Activated CD4-positive, alpha-beta T cell treated with anti-CD3 and anti-CD28 coated beads, Interleukin-2, amount 10 ng/mL, durations not matched to agents 24 days and 14 days (primary cell): ENCODE measurements at regions of chrX and their contacts with region 1.

Region 1: DNA sequence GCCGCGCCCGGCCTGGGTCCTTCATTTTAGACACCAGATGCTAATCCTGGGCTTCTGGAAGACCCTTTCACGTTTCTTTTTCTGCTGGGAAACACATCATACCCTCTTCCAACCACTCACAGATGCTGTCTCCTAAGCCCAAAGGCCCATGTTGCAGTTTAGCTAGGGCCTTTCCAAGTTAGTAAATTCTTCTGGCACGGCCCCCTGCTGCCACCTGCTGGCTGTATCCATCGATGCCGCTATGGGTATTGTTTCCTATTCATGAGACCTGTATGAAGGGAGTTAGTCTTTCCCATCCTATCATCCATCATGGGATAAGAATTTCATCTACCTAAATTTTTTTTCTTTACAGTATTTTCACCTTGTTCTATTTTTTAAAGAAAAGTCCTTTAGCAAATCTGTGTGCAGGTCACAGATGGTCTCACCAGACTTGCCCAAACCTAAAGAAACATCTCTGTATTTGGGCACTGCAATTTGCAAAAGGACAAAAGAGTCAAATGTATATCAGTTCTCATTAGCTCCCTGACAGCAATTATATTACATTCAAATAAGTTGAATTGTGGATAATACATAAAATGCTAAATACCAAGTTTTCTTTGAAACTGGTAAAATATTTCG is 37.8 kb upstream of the SLC9A7 start:
- DNase-seq: peak; percentile 90
- H3K4me3 Mint-ChIP-seq: no peak overlapping the region
- H3K27ac Mint-ChIP-seq: no peak overlapping the region
- H3K4me1 Mint-ChIP-seq: peaks cover 10% of the 10 kb centered on the region
- H3K27me3 Mint-ChIP-seq: peaks cover 6% of the 10 kb centered on the region

Region 2: DNA sequence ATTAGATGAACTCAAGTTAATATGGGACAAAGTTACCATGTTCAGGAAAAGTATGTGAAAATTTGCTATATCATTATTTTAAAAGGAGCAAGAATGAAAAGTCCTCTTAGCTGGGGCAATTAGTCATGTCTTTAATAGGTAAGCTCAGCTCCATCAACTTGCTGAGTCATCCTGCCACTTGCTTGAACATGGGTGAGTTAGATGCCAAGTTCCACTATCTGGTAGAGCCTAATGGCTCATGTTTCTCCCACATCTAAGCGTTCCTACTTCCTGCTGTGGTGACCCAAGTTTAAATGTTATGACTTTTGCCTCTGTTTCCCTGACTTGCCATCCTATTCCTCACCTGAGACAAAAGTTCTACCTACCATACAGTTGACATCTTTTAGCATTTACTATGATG is 528.3 kb before region 1 on chrX:
- intact Hi-C with region 1: no loop called
- DNase-seq: no peak
- H3K4me3 Mint-ChIP-seq: no peak overlapping the region
- H3K27ac Mint-ChIP-seq: no peak overlapping the region
- H3K4me1 Mint-ChIP-seq: no peaks in the 10 kb centered on the region
- H3K27me3 Mint-ChIP-seq: no peaks in the 10 kb centered on the region

Region 3: DNA sequence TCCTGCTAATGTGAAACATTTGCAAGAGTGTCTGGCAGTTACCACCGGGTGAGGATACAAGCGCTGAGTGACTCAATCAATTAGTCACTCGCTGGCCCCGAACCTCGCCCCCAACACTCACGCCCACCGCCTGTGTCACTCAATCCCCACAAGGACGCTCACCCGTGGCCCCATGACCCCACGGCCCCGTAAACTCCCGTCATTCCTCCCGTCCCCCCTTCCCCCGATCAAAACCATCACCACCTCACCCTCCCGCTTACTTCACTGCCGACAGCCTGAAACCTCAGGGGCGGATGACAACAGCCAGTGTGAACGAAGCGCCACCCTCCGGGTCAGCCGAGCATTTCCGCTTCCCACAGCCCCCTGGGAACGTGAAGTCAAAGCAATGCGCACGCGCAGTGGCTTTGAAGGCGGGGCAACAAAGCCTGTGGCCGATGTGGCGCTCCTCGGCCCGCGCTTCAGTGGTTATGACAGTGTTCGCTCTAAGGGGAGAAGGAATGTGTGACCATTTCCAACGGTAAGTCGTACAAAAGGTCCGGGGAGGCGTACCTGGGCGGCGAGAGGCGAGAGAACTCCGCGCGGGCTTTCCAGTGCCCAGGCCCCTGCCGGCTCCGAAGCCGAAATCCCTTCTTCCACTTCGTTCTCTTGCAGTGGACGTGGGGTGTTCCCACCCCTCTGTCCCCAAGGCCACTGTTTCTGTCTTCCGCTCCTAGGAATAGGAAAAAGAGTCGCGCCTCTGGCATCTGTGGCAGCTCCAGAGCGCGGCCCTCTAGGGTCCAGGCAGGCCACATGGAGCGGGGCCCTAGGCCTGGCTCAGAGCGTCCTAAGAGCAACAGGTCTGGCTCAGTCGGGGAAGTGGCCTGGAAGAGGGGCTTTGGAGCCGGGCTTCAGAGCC is 251.3 kb before region 1 on chrX and contains the start of gene ZNF674:
- intact Hi-C with region 1: loop called (anchors 5 kb)
- DNase-seq: peak; percentile 98
- H3K4me3 Mint-ChIP-seq: peak within 1 kb of the TSS; percentile 95
- H3K27ac Mint-ChIP-seq: peak within 1 kb of the TSS; percentile 97
- H3K4me1 Mint-ChIP-seq: peaks cover 16% of the 10 kb centered on the region
- H3K27me3 Mint-ChIP-seq: no peaks in the 10 kb centered on the region
- total RNA-seq, gene ZNF674: 2.1 and 2.6 TPM in 2 replicates

Region 4: GRCh38 chrX:46554942-46555341 is 241.7 kb before region 1 on chrX:
- intact Hi-C with region 1: loop called (anchors 1 kb)
- DNase-seq: no peak
- H3K4me3 Mint-ChIP-seq: no peak overlapping the region
- H3K27ac Mint-ChIP-seq: no peak overlapping the region
- H3K4me1 Mint-ChIP-seq: no peaks in the 10 kb centered on the region
- H3K27me3 Mint-ChIP-seq: no peaks in the 10 kb centered on the region

Region 5: GRCh38 chrX:46628460-46629371 is 168.0 kb before region 1 on chrX:
- intact Hi-C with region 1: loop called (anchors 10 kb)
- DNase-seq: peak; percentile 68
- H3K4me3 Mint-ChIP-seq: peak overlapping the region; percentile 67
- H3K27ac Mint-ChIP-seq: peak overlapping the region; percentile 94
- H3K4me1 Mint-ChIP-seq: peaks cover 20% of the 10 kb centered on the region
- H3K27me3 Mint-ChIP-seq: no peaks in the 10 kb centered on the region

Region 6: DNA sequence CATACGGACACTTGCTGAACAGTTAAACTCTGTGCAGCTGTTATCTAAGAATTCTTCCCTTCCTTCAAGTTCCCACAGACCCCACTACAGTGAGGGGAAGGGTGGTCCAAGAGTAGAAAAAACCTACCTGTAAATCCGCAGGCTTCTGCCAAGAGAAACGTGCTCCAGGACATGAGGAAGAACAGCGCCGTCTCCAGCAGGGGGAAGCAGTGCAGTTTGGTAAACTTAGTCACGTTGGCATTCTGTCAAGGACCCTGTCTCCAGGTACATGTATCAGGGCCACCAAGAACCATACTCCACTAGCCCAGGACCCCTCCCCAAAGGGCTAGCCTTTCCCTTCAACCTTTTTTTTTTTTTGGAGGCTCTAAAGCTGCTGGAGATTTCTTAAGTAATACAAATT is 143.2 kb before region 1 on chrX:
- intact Hi-C with region 1: loop called (anchors 5 kb)
- DNase-seq: no peak
- H3K4me3 Mint-ChIP-seq: no peak overlapping the region
- H3K27ac Mint-ChIP-seq: no peak overlapping the region
- H3K4me1 Mint-ChIP-seq: no peaks in the 10 kb centered on the region
- H3K27me3 Mint-ChIP-seq: no peaks in the 10 kb centered on the region

Region 7: DNA sequence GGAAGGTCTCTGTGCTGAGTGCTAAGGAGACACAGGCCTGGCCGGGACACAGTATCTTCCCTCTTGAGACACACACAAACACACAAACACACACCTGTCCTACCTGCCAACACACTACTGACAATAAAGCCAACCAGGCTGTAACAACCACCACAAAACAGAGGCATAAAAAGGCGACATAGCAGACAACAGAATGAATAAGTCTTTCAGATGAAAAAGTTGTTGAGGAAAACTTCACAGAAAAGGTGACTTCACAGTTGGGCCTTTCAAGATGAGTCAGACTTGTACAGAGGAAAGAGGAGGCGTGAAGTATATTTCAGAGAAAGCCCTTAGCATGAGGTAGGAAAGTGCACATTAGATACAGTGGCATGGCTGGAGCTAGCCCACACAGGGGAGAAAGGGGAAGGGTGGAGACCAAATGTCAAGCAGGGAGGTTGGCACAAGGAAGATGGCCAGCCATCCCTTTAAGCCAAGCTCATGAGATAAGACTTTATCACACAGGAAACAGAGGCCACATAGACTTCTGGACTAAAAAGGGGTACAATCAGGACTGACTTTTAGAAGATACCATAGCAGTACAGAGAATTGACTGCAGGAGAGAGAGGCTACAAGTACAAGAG is 91.8 kb before region 1 on chrX:
- intact Hi-C with region 1: loop called (anchors 10 kb)
- DNase-seq: peak; percentile 78
- H3K4me3 Mint-ChIP-seq: peak overlapping the region; percentile 82
- H3K27ac Mint-ChIP-seq: peak overlapping the region; percentile 99
- H3K4me1 Mint-ChIP-seq: peaks cover 46% of the 10 kb centered on the region
- H3K27me3 Mint-ChIP-seq: no peaks in the 10 kb centered on the region

Region 8: GRCh38 chrX:46758906-46759644 is 37.6 kb before region 1 on chrX and contains the start of gene SLC9A7:
- intact Hi-C with region 1: loop called (anchors 1 kb)
- DNase-seq: peak; percentile 94
- H3K4me3 Mint-ChIP-seq: peak within 1 kb of the TSS; percentile 99
- H3K27ac Mint-ChIP-seq: peak within 1 kb of the TSS; percentile 96
- H3K4me1 Mint-ChIP-seq: peaks cover 24% of the 10 kb centered on the region
- H3K27me3 Mint-ChIP-seq: peaks cover 4% of the 10 kb centered on the region
- total RNA-seq, gene SLC9A7: 37.7 and 43.8 TPM in 2 replicates